Activated T-helper 2 cell treated with anti-CD3 and anti-CD28 coated beads, Interferon-gamma antibody, Interleukin-2, Interleukin-4, amounts not matched to agents 10 μg/mL and 5 μg/mL and 100 μg/mL, durations not matched to agents 14 hours and 24 hours and 36 hours (primary cell): ENCODE measurements at regions of chr6 and their contacts with region 1.

Region 1: GRCh38 chr6:39302669-39303424 is 11.4 kb downstream of the KCNK17 start:
- DNase-seq: peak; percentile 77
- H3K4me3 Mint-ChIP-seq: peak overlapping the region; percentile 40
- H3K27ac Mint-ChIP-seq: peak overlapping the region; percentile 20
- H3K4me1 Mint-ChIP-seq: peaks cover 8% of the 10 kb centered on the region
- H3K27me3 Mint-ChIP-seq: peaks cover 4% of the 10 kb centered on the region

Region 2: DNA sequence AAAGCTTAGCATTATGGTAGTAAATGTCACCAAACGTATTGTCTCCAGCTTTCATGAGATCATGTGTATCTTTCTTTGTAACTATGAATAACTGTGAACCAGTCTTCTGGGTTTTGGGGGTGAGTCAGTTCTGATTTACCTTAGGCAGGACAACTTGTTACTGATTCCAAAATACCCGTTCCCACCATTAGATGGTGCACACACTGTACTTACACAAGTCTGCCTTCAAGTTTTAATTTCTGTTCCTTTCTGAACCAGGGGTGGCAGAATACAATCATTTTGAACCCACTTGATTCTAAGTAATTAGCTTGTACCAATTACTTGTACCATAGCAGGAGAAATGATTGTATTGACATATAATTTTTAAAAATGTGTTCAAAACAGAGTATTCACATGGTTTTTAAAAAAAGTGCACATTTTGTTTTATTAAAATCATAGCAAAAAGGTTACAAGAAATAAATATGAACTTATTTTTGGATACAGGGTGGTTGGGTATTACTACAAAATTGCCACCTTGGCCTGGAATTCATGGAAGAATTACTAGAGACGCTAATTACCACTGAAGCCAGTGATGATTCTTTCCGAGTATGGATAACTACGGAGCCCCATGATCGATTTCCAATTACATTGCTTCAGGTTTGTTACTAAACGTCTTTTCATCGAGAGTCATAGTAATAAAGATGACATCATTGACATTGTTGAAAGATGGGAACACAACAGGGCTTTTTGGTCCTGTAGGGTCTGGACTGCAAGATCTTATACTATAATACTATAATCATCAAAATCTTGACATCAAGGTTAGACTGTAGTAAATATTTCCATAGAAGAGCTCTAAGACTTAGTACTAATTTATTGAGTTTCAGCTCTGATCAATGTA is 329.4 kb before region 1 on chr6:
- intact Hi-C with region 1: loop called (anchors 2 kb)
- DNase-seq: no peak
- H3K4me3 Mint-ChIP-seq: no peak overlapping the region
- H3K27ac Mint-ChIP-seq: no peak overlapping the region
- H3K4me1 Mint-ChIP-seq: peaks cover 5% of the 10 kb centered on the region
- H3K27me3 Mint-ChIP-seq: peaks cover 46% of the 10 kb centered on the region

Region 3: GRCh38 chr6:39273406-39273821 is 29.4 kb before region 1 on chr6:
- intact Hi-C with region 1: no loop called
- DNase-seq: no peak
- H3K4me3 Mint-ChIP-seq: no peak overlapping the region
- H3K27ac Mint-ChIP-seq: no peak overlapping the region
- H3K4me1 Mint-ChIP-seq: no peaks in the 10 kb centered on the region
- H3K27me3 Mint-ChIP-seq: peaks cover 19% of the 10 kb centered on the region

Region 4: GRCh38 chr6:39664173-39664572 is 361.3 kb after region 1 on chr6:
- intact Hi-C with region 1: no loop called
- DNase-seq: no peak
- H3K4me3 Mint-ChIP-seq: no peak overlapping the region
- H3K27ac Mint-ChIP-seq: no peak overlapping the region
- H3K4me1 Mint-ChIP-seq: no peaks in the 10 kb centered on the region
- H3K27me3 Mint-ChIP-seq: peaks cover 5% of the 10 kb centered on the region